ENCODE measurements at regions of chr21 and their contacts with region 1.

Region 1: DNA sequence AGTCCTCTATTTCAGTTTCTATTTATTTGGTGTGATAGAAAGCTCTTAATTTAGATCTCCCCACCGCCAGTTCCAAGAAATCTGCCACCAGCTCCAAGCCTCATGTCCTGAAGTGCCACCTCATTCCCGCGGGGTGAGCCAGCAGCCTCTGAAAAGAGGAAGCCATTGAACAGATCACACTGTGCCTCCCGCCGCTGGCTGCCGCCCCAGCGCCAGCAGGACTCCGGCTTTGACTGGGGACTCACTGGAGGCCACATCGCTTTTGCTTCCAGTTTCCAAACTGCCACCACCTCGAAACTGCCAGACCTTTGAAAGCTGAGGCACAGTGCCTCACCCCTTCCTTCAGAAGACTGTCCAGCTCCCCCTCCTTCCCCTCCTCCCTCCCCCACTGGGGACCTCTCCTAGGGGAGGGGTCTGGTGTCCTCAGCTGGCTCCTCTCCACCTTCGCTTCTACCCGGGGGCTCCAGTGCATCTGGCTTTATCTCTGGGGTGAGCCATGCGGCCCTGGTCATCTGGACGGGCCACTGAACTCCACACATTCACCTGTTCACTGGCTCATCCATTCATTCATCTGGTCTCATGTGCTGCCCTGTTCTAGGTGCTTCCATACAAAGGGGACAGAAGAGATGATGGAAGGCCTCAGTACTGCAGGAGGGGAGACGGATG is 58.9 kb downstream of the VPS26C start:
- H3K4me3 Mint-ChIP-seq: peak overlapping the region; percentile 50
- H3K27ac Mint-ChIP-seq: peak overlapping the region; percentile 89
- H3K4me1 Mint-ChIP-seq: peaks cover 42% of the 10 kb centered on the region
- H3K27me3 Mint-ChIP-seq: no peaks in the 10 kb centered on the region

Region 2: GRCh38 chr21:37257967-37258877 is 50.0 kb after region 1 on chr21:
- intact Hi-C with region 1: loop called (anchors 5 kb)
- H3K4me3 Mint-ChIP-seq: peak overlapping the region; percentile 75
- H3K27ac Mint-ChIP-seq: peak overlapping the region; percentile 96
- H3K4me1 Mint-ChIP-seq: peaks cover 31% of the 10 kb centered on the region
- H3K27me3 Mint-ChIP-seq: no peaks in the 10 kb centered on the region

Region 3: GRCh38 chr21:37593015-37593414 is 384.8 kb after region 1 on chr21:
- intact Hi-C with region 1: no loop called
- H3K4me3 Mint-ChIP-seq: no peak overlapping the region
- H3K27ac Mint-ChIP-seq: no peak overlapping the region
- H3K4me1 Mint-ChIP-seq: no peaks in the 10 kb centered on the region
- H3K27me3 Mint-ChIP-seq: peaks cover 2% of the 10 kb centered on the region